Left colon (tissue), 2 donors: ENCODE measurements at regions of chr20 and their contacts with region 1.

Region 1: DNA sequence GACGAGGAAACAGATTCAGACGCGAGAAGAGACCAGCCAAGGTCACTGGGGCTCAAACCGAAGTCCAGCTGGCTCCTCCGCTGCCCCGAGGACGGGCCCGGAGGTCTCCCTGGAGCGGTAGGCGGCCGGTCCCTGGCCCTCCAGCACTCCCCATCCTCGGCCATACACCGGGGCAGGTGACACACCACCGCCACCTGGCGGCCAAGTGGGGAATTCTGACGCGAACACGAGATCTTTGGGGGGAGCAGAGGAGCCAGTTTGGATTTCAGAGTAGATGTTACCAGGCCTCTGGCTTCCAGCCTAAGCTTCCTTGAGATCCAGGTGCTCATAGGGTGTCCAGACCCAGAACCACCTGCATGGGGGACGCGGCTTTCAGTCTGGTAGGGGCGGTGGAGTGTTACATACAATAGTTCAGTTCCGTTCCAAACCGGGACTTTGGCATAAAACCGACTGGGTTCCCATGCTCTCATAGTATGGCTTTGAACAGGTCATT is 16.1 kb downstream of the BPIFB1 start:
- DNase-seq: peak; percentile 27 to 65
- ATAC-seq: peak; percentile 73

Region 2: GRCh38 chr20:32789896-32790750 is 509.0 kb before region 1 on chr20:
- intact Hi-C with region 1: loop called in 1 of 2 experiments (anchors 5 kb)
- DNase-seq: peak; percentile 48 to 76
- ATAC-seq: peak; percentile 93

Region 3: GRCh38 chr20:32902456-32903420 is 396.4 kb before region 1 on chr20:
- intact Hi-C with region 1: loop called (anchors 5 to 10 kb)
- DNase-seq: peak; percentile 29 to 51
- ATAC-seq: peak; percentile 70

Region 4: DNA sequence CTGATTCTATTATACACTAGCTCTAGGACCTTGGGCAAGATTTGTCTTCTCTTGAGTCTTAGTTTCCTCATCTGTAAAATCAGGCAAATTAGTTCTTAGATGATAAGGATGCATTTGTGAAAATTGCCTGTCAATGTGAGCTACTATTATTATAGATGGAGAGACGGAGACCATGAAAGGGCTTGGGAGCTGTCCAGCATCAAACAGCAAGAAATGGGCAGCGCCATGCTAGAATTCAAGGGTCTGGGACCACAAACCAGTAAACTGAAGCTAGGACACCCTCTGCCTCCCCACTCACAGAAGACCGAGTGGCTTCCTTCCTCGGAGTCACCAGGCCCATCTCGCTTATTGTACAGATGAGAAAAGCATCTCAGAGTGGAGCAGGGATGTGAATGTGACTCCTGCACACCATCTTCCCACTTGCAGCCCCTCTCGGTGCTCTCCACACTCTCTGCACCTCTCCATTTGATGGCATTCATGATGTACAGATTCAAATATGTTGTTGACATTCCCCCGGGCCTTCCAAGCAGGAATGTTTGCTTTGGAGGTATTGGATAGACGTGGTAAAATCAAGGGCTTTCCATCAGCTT is 106.2 kb before region 1 on chr20:
- intact Hi-C with region 1: no loop called
- DNase-seq: no peak
- ATAC-seq: no peak